OCI-LY7 (cell line): ENCODE measurements at regions of chr12 and their contacts with region 1.

Region 1: DNA sequence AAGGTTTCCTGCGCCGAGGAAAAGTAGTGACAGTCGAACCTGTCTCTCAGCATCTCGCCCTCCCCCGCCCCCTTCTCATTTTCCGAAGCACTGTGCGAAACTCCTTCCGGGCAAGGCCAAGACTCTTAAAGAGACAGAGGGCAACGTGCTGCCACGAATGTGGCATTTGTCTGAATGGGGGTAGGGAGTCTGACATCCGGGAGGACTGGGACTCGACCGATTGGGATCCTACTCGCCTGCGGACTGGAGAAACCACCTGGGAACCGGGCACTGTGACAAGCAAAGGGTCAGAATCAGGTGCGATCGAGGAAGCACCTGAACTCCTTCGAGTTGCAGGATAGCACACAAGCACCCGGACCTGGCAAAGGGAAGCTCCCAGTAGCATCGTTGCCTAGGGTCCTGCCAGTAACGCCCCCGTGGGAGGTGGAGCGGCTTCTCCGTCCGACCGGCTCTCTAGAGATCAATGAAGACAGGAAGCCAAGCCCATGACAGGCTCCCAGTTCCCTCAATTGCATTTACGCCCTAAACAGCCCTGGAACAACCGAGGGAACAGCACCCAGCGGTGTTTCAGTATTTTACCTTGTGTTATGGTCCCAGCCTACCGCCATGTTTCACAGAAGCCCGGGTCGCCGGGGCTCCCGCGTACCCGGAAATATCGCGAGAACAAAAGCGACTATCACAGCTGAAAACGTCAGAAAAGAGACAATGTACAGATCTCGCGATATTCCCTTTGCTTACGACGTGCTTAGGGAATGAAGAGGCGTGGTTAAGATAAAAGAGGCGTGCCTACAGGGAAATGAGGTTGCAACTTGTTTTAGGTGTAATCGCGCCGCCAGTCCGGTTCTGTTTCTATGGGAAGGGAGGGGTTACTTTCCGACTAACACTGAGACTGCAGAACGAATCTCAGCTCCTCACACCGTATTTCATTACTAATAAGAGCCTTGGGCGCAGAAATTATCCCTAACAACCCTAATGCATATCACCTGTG is at the start of gene ERGIC2:
- DNase-seq: peak; percentile 99
- H3K4me3 ChIP-seq: peak within 1 kb of the TSS; percentile 97
- H3K27ac ChIP-seq: peak within 1 kb of the TSS; percentile 85
- H3K4me1 ChIP-seq: peaks cover 29% of the 10 kb centered on the region
- CTCF ChIP-seq: no peak
- total RNA-seq, gene ERGIC2: 27.8 and 34.5 TPM in 2 replicates

Region 2: DNA sequence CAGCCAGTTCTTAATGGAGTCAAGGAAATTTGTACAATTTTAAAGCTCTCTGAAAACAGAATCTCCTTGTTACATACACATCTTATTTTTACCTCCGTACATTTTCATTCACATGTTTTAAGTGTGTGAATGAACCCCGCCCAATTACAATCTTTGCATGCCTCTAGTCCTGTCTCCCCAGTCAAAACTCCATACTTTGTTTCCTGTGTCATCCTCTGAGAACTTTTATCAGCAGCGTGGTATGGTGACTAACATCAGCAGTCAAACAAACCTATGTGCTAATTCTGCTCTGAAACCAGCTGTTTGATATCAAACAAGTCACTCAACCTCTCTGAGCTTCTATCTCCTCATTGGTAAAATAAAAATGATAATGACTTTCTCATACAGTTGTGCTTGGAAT is 15.9 kb after region 1 on chr12:
- CTCF ChIA-PET with region 1: no interaction called
- POLR2A ChIA-PET with region 1: no interaction called
- intact Hi-C with region 1: no loop called
- DNase-seq: no peak
- H3K4me3 ChIP-seq: no peak overlapping the region
- H3K27ac ChIP-seq: no peak overlapping the region
- H3K4me1 ChIP-seq: no peaks in the 10 kb centered on the region
- CTCF ChIP-seq: no peak

Region 3: GRCh38 chr12:29427964-29428363 is 47.1 kb after region 1 on chr12:
- CTCF ChIA-PET with region 1: no interaction called
- POLR2A ChIA-PET with region 1: interaction called, 3 read pairs
- intact Hi-C with region 1: loop called (anchors 5 kb)
- DNase-seq: peak; percentile 65
- H3K4me3 ChIP-seq: no peak overlapping the region
- H3K27ac ChIP-seq: no peak overlapping the region
- H3K4me1 ChIP-seq: peaks cover 31% of the 10 kb centered on the region
- CTCF ChIP-seq: peak; percentile 72

Region 4: GRCh38 chr12:29455087-29455486 is 74.3 kb after region 1 on chr12:
- CTCF ChIA-PET with region 1: no interaction called
- POLR2A ChIA-PET with region 1: no interaction called
- intact Hi-C with region 1: no loop called
- DNase-seq: no peak
- H3K4me3 ChIP-seq: no peak overlapping the region
- H3K27ac ChIP-seq: no peak overlapping the region
- H3K4me1 ChIP-seq: no peaks in the 10 kb centered on the region
- CTCF ChIP-seq: no peak

Region 5: GRCh38 chr12:29591140-29592020 is 210.6 kb after region 1 on chr12:
- CTCF ChIA-PET with region 1: no interaction called
- POLR2A ChIA-PET with region 1: no interaction called
- intact Hi-C with region 1: no loop called
- DNase-seq: no peak
- H3K4me3 ChIP-seq: no peak overlapping the region
- H3K27ac ChIP-seq: no peak overlapping the region
- H3K4me1 ChIP-seq: no peaks in the 10 kb centered on the region
- CTCF ChIP-seq: no peak

Region 6: DNA sequence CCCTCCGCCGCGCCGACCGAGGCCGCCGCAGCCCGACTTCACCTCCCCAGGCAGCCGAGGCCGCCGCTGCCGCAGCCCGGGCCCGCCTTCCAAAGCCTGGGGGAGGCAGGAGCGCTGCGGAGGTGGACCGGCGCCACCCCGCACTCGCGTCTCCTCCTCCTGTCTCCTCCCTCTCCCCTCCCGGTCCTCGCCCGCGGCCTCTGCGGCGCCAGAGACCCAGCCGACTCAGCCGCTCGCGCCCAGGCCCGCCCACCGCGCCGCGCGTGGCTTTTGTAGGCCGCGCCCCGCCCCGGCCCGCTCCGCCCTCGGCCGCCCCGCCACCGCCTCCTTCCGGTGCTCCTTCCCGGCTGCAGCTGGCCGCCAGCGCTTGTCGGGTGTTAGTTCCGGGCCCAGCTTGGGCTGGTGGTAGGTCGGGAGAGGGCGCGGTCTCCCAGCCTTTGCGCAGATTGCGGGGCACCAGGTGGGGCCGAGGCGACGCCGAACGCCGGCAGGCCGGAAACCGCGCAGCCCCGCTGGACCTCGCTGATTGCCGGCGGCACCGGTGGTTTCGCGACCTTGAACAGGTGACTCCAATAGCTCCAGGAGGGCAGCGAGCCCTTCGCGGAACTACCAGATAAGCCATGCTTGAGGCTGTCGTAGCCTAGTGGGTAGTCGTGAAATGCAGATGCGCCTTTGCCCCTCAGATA is 1374.0 kb after region 1 on chr12 and contains the start of gene CAPRIN2:
- CTCF ChIA-PET with region 1: no interaction called
- POLR2A ChIA-PET with region 1: no interaction called
- intact Hi-C with region 1: loop called (anchors 5 kb)
- DNase-seq: peak; percentile 94
- H3K4me3 ChIP-seq: peak within 1 kb of the TSS; percentile 89
- H3K27ac ChIP-seq: peak within 1 kb of the TSS; percentile 24
- H3K4me1 ChIP-seq: peaks cover 25% of the 10 kb centered on the region
- CTCF ChIP-seq: peak; percentile 61
- total RNA-seq, gene CAPRIN2: 21.7 and 23.8 TPM in 2 replicates